Dorsolateral prefrontal cortex (tissue), 120 donors: ENCODE measurements at regions of chr12 and their contacts with region 1.

Region 1: DNA sequence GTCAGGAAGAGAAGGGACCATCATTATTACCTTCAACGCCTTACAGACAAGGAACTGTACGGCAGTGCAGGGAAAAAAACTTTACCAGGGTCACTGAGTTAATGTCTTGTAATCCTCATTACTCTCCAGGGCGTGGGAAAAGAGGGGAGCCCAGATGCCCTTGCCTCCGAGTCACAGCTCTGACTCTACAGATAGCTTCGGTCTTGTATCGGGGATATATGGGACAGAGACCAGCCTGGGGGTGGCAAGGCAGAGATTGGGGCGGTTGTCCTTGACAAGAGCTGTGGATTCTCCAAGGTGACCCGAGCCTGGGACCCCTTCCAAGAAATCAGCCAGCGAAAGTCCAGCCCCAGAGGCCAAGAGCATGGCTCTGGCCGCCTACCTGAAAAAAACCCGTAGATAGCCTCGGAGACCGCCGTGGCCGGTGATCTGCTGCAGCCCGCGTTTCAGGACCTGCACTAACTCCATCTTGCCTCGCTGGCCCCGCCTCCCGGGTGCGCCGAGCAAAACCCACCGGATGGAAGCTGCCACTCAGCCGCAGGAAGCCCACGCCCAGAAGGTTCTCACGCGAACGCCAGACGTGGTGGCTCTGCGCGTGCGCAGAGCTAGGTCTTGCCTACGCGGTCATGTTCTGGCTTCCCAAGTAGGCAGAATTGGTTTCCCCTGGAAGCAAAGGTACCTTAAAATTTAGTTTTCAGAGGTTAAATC is at the start of gene NDUFA12:
- DNase-seq: peak; percentile 89 to 96 (median 95)
- H3K4me3 ChIP-seq: peak within 1 kb of the TSS; percentile 63 to 98 (median 88)
- H3K27ac ChIP-seq: peak within 1 kb of the TSS; percentile 51 to 95 (median 86)
- H3K27me3 ChIP-seq: no peaks in the 10 kb centered on the region
- CTCF ChIP-seq: peak in 35 of 56 donors; percentile 11 to 49 (median 25)
- total RNA-seq, gene NDUFA12: 53.8 to 149 (median 106) TPM

Region 2: GRCh38 chr12:94922561-94922960 is 80.8 kb before region 1 on chr12:
- intact Hi-C with region 1: no loop called
- DNase-seq: no peak
- H3K4me3 ChIP-seq: no peak overlapping the region
- H3K27ac ChIP-seq: no peak overlapping the region
- H3K27me3 ChIP-seq: no peaks in the 10 kb centered on the region
- CTCF ChIP-seq: no peak

Region 3: DNA sequence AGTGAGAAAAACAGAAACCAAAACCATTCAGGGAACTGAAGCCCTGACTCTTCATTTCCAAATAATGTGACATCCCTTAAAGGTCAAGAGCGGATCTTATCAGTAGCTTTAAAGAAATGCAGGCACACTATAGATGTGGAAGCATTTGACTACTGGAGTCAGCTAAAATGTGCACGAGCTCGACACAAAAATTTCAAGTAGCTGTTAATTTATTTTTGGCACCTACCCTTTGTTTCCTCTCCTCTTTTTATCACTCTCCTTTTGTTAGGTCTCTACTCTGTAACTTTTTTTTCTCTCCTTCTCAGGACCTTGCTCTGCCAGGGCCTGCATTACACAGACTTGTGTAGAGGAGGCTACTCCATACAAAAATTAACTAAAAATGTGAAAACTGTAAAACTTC is 155.6 kb after region 1 on chr12:
- intact Hi-C with region 1: no loop called
- DNase-seq: no peak
- H3K4me3 ChIP-seq: no peak overlapping the region
- H3K27ac ChIP-seq: no peak overlapping the region
- H3K27me3 ChIP-seq: no peaks in the 10 kb centered on the region
- CTCF ChIP-seq: no peak

Region 4: GRCh38 chr12:95473884-95474659 is 470.7 kb after region 1 on chr12 and contains the start of gene METAP2:
- intact Hi-C with region 1: loop called in 1 of 2 experiments (anchors 5 kb)
- DNase-seq: peak; percentile 92 to 98 (median 96)
- H3K4me3 ChIP-seq: peak within 1 kb of the TSS; percentile 65 to 100 (median 96)
- H3K27ac ChIP-seq: peak within 1 kb of the TSS; percentile 59 to 97 (median 91)
- H3K27me3 ChIP-seq: no peaks in the 10 kb centered on the region
- CTCF ChIP-seq: peak in 36 of 56 donors; percentile 4 to 55 (median 25)
- total RNA-seq, gene METAP2: 38.9 to 82.5 (median 54.8) TPM